Activated B cell treated with CpG ODN at 0.5 μM for 24 hours (primary cell): ENCODE measurements at regions of chr9 and their contacts with region 1.

Region 1: GRCh38 chr9:128723866-128724743 is at the start of gene ZDHHC12:
- DNase-seq: peak; percentile 96
- ATAC-seq: peak; percentile 97
- H3K4me3 Mint-ChIP-seq: peak within 1 kb of the TSS; percentile 92
- H3K27ac Mint-ChIP-seq: peak within 1 kb of the TSS; percentile 89
- H3K4me1 Mint-ChIP-seq: peaks cover 28% of the 10 kb centered on the region
- H3K27me3 Mint-ChIP-seq: no peaks in the 10 kb centered on the region
- CTCF ChIP-seq: no peak
- total RNA-seq, gene ZDHHC12: 40.0 and 40.7 TPM in 2 replicates

Region 2: GRCh38 chr9:128455849-128456612 is 268.1 kb before region 1 on chr9 and contains the start of gene ODF2:
- CTCF ChIA-PET with region 1: no interaction called
- POLR2A ChIA-PET with region 1: interaction called, 3 read pairs
- intact Hi-C with region 1: loop called (anchors 1 kb)
- DNase-seq: peak; percentile 99
- ATAC-seq: peak; percentile 88
- H3K4me3 Mint-ChIP-seq: peak within 1 kb of the TSS; percentile 88
- H3K27ac Mint-ChIP-seq: peak within 1 kb of the TSS; percentile 83
- H3K4me1 Mint-ChIP-seq: peaks cover 14% of the 10 kb centered on the region
- H3K27me3 Mint-ChIP-seq: no peaks in the 10 kb centered on the region
- CTCF ChIP-seq: no peak
- total RNA-seq, gene ODF2: 41.2 and 45.7 TPM in 2 replicates

Region 3: DNA sequence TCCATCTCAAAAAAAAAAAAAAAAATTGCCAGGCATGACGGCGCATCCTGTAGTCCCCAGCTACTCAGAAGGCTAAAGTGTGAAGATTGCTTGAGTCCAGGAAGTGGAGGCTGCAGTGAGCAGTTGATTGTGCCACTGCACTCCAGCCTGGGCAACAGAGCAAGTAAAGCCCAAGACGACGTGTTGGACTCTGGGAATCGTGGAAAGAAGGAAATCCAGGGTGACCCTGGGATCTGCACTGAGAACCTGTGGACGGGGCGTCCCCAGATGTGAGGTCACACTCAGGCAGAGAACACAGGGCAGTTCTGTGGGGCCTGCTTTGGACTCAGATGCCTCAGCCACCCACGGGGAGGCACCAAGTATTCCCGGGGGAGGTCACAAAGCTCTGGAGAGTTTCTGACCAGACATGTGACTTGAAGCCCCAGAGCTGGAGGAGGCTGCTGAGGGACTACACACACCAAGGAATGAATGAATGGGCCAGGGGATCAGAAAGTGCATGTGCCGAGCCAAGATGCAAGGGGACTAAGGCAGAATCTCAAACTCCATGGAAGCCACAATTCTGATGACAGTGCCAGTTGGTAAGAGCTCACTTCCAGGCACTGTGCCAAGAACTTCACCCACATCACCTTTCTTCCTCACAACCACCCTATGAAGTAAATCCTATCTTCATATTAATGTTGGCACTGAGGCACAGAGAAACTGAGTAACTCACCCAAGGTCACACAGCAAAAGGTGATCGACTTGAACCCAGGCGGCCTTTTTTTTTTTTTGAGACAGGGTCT is 80.4 kb before region 1 on chr9:
- CTCF ChIA-PET with region 1: no interaction called
- POLR2A ChIA-PET with region 1: interaction called, 17 read pairs
- intact Hi-C with region 1: no loop called
- DNase-seq: peak; percentile 44
- ATAC-seq: peak; percentile 84
- H3K4me3 Mint-ChIP-seq: peak overlapping the region; percentile 45
- H3K27ac Mint-ChIP-seq: peak overlapping the region; percentile 84
- H3K4me1 Mint-ChIP-seq: peaks cover 23% of the 10 kb centered on the region
- H3K27me3 Mint-ChIP-seq: no peaks in the 10 kb centered on the region
- CTCF ChIP-seq: no peak

Region 4: GRCh38 chr9:128688512-128689292 is 35.4 kb before region 1 on chr9 and contains the start of gene SET:
- CTCF ChIA-PET with region 1: no interaction called
- POLR2A ChIA-PET with region 1: interaction called, 21 read pairs
- intact Hi-C with region 1: loop called (anchors 1 kb)
- DNase-seq: peak; percentile 97
- ATAC-seq: peak; percentile 81
- H3K4me3 Mint-ChIP-seq: peak within 1 kb of the TSS; percentile 98
- H3K27ac Mint-ChIP-seq: peak within 1 kb of the TSS; percentile 87
- H3K4me1 Mint-ChIP-seq: peaks cover 68% of the 10 kb centered on the region
- H3K27me3 Mint-ChIP-seq: no peaks in the 10 kb centered on the region
- CTCF ChIP-seq: no peak
- total RNA-seq, gene SET: 762 and 801 TPM in 2 replicates

Region 5: GRCh38 chr9:128702445-128702948 is 21.6 kb before region 1 on chr9 and contains the start of gene PKN3:
- CTCF ChIA-PET with region 1: interaction called, 5 read pairs
- POLR2A ChIA-PET with region 1: interaction called, 6 read pairs
- intact Hi-C with region 1: loop called (anchors 1 kb)
- DNase-seq: peak; percentile 91
- ATAC-seq: peak; percentile 85
- H3K4me3 Mint-ChIP-seq: peak within 1 kb of the TSS; percentile 85
- H3K27ac Mint-ChIP-seq: peak within 1 kb of the TSS; percentile 24
- H3K4me1 Mint-ChIP-seq: peaks cover 13% of the 10 kb centered on the region
- H3K27me3 Mint-ChIP-seq: no peaks in the 10 kb centered on the region
- CTCF ChIP-seq: peak; percentile 57
- total RNA-seq, gene PKN3: 16.9 and 17.4 TPM in 2 replicates

Region 6: GRCh38 chr9:128786681-128787601 is 62.8 kb after region 1 on chr9 and contains the start of gene TBC1D13:
- CTCF ChIA-PET with region 1: no interaction called
- POLR2A ChIA-PET with region 1: interaction called, 4 read pairs
- intact Hi-C with region 1: loop called (anchors 1 kb)
- DNase-seq: peak; percentile 96
- ATAC-seq: peak; percentile 95
- H3K4me3 Mint-ChIP-seq: peak within 1 kb of the TSS; percentile 95
- H3K27ac Mint-ChIP-seq: peak within 1 kb of the TSS; percentile 85
- H3K4me1 Mint-ChIP-seq: peaks cover 17% of the 10 kb centered on the region
- H3K27me3 Mint-ChIP-seq: no peaks in the 10 kb centered on the region
- CTCF ChIP-seq: no peak
- total RNA-seq, gene TBC1D13: 21.5 and 26.4 TPM in 2 replicates

Region 7: GRCh38 chr9:128947422-128948301 is 223.6 kb after region 1 on chr9 and contains the starts of genes DOLK and NUP188:
- CTCF ChIA-PET with region 1: no interaction called
- POLR2A ChIA-PET with region 1: interaction called, 13 read pairs
- intact Hi-C with region 1: no loop called
- DNase-seq: peak; percentile 100
- ATAC-seq: peak; percentile 86
- H3K4me3 Mint-ChIP-seq: peak within 1 kb of the TSS; percentile 98
- H3K27ac Mint-ChIP-seq: peak within 1 kb of the TSS; percentile 97
- H3K4me1 Mint-ChIP-seq: peaks cover 29% of the 10 kb centered on the region
- H3K27me3 Mint-ChIP-seq: no peaks in the 10 kb centered on the region
- CTCF ChIP-seq: no peak
- total RNA-seq, gene DOLK: 9.0 and 10.3 TPM in 2 replicates
- total RNA-seq, gene NUP188: 76.9 and 103 TPM in 2 replicates